ENCODE measurements at regions of chr3 and their contacts with region 1.

Region 1: DNA sequence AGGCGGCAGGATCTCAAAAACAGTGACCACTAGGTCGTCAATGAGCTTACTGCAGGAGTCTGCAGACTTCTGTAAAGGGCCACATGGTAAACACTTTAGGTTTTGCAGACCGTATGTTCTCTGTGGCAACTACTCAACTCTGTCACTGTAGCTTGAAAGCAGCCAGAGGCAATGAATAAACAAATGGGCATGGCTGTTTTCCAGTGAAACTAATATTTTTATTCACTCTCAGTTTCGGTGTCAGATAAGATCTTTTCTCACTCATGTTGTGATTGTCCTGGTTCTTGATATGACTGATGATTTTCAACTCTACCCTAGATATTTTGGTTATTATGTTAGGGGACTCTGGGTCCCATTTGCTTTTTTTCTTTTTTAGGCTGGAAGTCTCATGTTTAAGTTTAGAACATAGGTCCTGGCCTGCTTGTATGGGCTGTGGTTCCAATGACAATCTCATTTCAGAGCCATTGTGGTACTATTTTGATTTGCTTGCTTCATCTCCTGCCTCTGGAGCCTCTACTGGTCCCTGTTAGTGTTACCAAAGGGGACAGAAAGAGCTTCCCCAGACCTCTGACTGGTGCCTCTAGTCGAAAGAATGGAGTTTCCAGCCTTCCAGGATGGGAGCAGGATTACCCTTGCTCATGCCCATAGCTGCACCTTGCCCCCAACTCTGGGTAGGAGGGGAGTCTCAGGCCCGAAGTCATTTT is 222.0 kb downstream of the STT3B start:
- DNase-seq: peak; percentile 25
- H3K4me3 Mint-ChIP-seq: no peak overlapping the region
- H3K27ac Mint-ChIP-seq: peak overlapping the region; percentile 94
- H3K4me1 Mint-ChIP-seq: peaks cover 46% of the 10 kb centered on the region
- H3K27me3 Mint-ChIP-seq: no peaks in the 10 kb centered on the region

Region 2: DNA sequence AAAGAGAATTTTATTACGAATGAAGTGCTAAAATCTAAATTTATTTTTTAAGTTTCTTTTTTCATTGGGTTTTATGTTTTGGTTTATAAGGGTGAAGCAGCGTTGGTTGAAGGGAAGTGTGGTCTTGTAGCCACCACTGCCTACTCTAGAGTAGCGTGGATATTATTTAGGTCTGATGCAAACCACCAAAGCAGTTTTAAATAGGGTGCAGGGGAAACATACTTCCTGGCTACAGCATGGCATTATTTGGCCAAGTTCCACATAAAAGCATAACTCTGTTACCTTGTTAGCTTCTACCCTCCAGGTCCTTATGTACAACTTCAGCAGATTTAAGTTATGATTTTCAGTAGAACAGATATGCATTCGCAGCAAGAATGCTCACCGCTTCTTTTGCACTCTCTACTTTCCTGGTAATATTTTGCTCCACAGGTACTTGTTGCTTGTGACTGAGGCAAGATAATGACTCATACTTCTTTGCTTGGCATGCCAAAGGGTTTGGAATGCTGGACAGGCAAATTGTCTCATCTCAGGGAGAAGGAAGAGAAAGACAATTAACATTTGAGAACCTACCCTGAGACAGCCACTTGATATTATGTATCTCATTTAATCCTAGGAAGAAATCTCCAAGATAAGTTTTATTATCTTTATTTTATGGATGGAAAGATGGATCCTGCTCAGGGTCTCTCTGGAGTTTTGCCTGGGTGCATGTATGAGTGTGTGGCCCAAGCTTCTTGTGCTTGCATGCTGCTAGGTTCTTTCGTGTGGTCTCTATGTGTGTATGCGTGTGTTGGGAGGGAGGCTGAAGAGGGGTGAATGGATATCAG is 1142.9 kb before region 1 on chr3:
- CTCF ChIA-PET with region 1: no interaction called
- POLR2A ChIA-PET with region 1: no interaction called
- intact Hi-C with region 1: loop called (anchors 10 kb)
- DNase-seq: no peak
- H3K4me3 Mint-ChIP-seq: peak overlapping the region; percentile 86
- H3K27ac Mint-ChIP-seq: peak overlapping the region; percentile 96
- H3K4me1 Mint-ChIP-seq: peaks cover 72% of the 10 kb centered on the region
- H3K27me3 Mint-ChIP-seq: no peaks in the 10 kb centered on the region

Region 3: GRCh38 chr3:31213869-31214486 is 540.7 kb before region 1 on chr3:
- CTCF ChIA-PET with region 1: no interaction called
- POLR2A ChIA-PET with region 1: no interaction called
- intact Hi-C with region 1: loop called (anchors 5 kb)
- DNase-seq: peak; percentile 57
- H3K4me3 Mint-ChIP-seq: peak overlapping the region; percentile 1
- H3K27ac Mint-ChIP-seq: peak overlapping the region; percentile 82
- H3K4me1 Mint-ChIP-seq: peaks cover 94% of the 10 kb centered on the region
- H3K27me3 Mint-ChIP-seq: no peaks in the 10 kb centered on the region

Region 4: GRCh38 chr3:31462050-31462569 is 292.6 kb before region 1 on chr3:
- CTCF ChIA-PET with region 1: no interaction called
- POLR2A ChIA-PET with region 1: no interaction called
- intact Hi-C with region 1: loop called (anchors 5 kb)
- DNase-seq: peak; percentile 47
- H3K4me3 Mint-ChIP-seq: peak overlapping the region; percentile 30
- H3K27ac Mint-ChIP-seq: peak overlapping the region; percentile 16
- H3K4me1 Mint-ChIP-seq: peaks cover 62% of the 10 kb centered on the region
- H3K27me3 Mint-ChIP-seq: no peaks in the 10 kb centered on the region

Region 5: DNA sequence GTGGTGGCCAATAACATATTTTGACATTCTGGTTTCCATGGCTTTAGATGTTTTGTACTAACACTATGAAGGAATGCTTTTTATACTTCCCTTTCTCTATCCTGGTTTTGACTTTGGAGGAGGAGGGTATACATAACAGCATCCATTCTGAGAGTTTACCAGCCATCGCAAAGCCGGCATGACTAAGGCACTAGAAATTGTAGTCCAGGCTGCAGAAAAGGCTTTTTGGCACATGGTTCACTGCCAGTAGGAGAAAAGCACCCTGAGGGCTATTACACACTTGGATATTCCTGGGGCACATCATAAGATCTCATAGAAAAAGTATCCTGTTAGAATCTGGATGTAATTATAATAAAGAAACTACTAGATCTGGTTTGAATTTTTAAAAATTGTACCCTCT is 120.2 kb before region 1 on chr3:
- CTCF ChIA-PET with region 1: no interaction called
- POLR2A ChIA-PET with region 1: no interaction called
- intact Hi-C with region 1: loop called (anchors 1 kb)
- DNase-seq: no peak
- H3K4me3 Mint-ChIP-seq: no peak overlapping the region
- H3K27ac Mint-ChIP-seq: no peak overlapping the region
- H3K4me1 Mint-ChIP-seq: peaks cover 48% of the 10 kb centered on the region
- H3K27me3 Mint-ChIP-seq: no peaks in the 10 kb centered on the region

Region 6: DNA sequence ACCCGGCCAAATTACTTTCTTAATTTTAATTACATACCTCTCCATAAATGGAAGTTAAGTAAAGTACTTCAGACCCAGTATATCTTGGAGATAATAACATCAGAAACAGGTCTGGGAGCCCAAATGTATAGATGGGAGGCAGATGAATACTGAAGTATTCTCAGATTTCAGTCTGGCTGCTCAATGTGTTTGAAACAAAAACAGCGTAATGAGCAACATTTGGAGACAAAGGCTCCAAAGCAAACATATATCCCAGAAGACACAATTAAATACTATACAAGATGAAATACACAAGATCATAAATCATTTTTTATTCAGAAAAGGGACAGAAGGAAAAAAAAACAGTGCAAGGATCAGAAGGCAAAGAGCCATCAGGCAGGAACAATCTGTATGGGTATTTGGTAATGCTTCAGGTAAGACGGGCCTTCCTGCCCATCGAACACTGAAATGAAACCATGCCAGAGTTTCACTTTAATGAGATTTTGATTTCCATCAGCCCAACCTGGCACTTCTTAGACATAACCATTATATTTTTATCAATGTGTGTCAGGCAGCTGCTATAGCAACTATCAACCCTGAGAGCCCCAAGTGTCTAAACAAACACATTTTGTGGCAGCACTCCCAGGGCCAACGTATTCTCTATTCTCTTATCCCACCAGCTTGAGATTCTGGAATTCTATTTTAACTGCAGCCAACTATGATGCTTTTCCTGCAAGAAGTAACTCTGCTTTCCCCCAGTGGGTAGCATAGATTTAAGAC is 11.2 kb before region 1 on chr3:
- CTCF ChIA-PET with region 1: no interaction called
- POLR2A ChIA-PET with region 1: no interaction called
- intact Hi-C with region 1: no loop called
- DNase-seq: no peak
- H3K4me3 Mint-ChIP-seq: no peak overlapping the region
- H3K27ac Mint-ChIP-seq: no peak overlapping the region
- H3K4me1 Mint-ChIP-seq: no peaks in the 10 kb centered on the region
- H3K27me3 Mint-ChIP-seq: no peaks in the 10 kb centered on the region

Region 7: GRCh38 chr3:31768479-31769123 is 13.9 kb after region 1 on chr3:
- CTCF ChIA-PET with region 1: interaction called, 12 read pairs
- POLR2A ChIA-PET with region 1: interaction called, 5 read pairs
- intact Hi-C with region 1: loop called (anchors 1 kb)
- DNase-seq: peak; percentile 66
- H3K4me3 Mint-ChIP-seq: no peak overlapping the region
- H3K27ac Mint-ChIP-seq: peak overlapping the region; percentile 28
- H3K4me1 Mint-ChIP-seq: peaks cover 58% of the 10 kb centered on the region
- H3K27me3 Mint-ChIP-seq: peaks cover 4% of the 10 kb centered on the region

Region 8: DNA sequence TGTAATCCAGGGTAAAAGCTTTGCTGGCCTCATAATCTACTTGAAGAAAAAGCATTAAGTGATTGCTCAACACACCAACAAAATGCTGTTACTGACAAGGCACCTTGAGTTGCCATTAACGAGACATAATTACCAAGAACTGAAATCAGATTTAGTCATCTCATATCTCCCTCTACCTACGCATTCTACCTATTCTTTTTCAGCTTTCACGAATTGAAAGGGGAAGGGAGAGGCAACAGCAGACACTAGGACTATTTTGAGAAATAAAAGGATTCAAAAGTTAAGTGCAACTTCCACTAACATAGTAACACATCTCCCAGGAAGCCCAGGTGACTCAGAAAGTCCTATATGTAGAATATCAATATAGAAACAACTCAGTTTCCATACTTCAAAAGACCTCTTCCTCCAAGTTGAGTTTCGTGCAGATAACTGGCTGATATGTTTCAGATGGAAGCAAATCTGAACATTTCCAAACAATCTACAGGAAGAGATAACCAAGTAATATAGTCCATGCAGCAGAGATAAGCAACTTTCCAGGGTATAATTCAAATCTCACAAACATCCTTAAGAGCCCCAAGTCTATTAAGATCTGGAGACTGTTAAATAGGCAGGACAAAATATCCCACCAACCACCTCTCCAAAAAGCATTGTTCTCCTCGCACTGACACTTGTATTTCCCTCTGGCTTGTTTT is 224.4 kb after region 1 on chr3:
- CTCF ChIA-PET with region 1: no interaction called
- POLR2A ChIA-PET with region 1: no interaction called
- intact Hi-C with region 1: loop called (anchors 1 kb)
- DNase-seq: no peak
- H3K4me3 Mint-ChIP-seq: peak overlapping the region; percentile 57
- H3K27ac Mint-ChIP-seq: peak overlapping the region; percentile 50
- H3K4me1 Mint-ChIP-seq: peaks cover 28% of the 10 kb centered on the region
- H3K27me3 Mint-ChIP-seq: peaks cover 62% of the 10 kb centered on the region